Right ventricle myocardium inferior (tissue), 1 donor: ENCODE measurements at regions of chr10 and their contacts with region 1.

Region 1: DNA sequence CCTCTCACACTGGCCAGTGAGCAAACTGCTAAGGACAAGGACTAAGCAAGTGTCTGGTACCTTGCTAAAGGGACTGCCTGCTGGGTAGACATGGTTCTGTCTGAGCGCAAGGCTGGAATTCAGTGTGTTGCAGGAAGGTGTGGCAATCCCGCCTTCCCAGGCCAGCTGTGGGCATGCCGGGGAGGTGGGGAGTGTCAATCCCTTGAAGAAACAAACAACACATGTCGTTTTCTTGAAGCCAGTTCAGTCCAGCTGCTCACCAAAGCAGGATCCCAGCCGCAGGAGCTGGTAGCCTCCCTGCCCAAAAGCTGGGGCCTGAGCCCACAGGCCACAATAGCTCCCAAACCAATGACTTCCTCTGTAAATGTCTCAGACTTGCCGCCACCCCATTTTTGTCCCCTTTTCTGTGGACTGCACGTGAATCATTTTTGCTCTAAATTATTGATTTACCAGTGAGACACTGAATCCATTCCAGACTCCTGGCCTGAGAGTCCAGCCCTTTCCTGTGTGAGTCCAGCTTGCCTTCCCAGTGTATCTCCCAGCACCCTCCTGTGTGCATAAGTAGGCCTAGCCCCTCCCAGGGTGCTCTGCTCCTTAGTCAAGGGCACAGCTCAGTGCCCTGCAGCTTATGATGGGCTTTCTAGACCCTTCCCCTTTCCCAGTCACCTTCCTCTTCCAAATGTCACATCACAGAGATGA is 166.8 kb downstream of the RGS10 start:
- DNase-seq: no peak
- ATAC-seq: peak; percentile 10

Region 2: DNA sequence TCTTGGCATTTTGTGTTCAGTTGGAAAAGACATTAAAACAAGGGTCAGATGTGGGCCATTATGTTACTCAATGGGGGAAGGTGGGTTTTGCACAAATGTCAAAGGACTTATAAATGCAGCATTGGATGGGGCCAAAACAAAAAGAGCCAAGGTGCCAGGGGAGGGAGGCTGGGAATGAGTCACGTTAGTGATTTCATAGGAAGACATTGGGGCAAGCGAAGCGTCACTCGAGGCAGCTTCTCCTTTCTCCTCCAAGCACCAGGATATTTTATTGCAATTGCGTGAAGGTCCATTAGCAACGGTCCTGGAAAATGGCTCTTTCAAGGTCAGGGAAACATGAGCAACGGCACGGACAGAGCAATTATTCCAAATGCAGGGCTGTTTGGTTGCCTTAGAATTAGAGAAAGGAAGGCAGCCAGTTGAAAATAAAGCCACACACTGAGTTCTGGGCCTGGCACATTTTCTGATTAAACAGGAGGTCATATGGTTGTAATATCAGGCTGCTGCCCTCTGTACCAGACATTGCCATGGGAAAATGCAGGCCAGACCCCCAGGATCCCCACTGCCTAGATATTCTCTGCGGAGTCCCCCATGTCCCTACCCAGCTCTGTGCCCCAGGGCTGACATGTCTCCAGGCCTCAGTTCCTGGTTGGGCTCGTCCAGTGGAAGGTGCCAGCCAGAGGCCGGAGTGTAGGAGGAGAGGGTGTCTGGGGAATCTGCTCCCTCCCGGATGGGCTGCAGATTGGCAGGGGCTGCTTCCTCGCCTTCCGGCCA is 409.5 kb before region 1 on chr10:
- intact Hi-C with region 1: no loop called
- DNase-seq: no peak
- ATAC-seq: peak; percentile 73

Region 3: GRCh38 chr10:119341459-119342301 is 34.0 kb before region 1 on chr10:
- intact Hi-C with region 1: loop called (anchors 5 kb)
- DNase-seq: peak; percentile 88
- ATAC-seq: peak; percentile 90

Region 4: DNA sequence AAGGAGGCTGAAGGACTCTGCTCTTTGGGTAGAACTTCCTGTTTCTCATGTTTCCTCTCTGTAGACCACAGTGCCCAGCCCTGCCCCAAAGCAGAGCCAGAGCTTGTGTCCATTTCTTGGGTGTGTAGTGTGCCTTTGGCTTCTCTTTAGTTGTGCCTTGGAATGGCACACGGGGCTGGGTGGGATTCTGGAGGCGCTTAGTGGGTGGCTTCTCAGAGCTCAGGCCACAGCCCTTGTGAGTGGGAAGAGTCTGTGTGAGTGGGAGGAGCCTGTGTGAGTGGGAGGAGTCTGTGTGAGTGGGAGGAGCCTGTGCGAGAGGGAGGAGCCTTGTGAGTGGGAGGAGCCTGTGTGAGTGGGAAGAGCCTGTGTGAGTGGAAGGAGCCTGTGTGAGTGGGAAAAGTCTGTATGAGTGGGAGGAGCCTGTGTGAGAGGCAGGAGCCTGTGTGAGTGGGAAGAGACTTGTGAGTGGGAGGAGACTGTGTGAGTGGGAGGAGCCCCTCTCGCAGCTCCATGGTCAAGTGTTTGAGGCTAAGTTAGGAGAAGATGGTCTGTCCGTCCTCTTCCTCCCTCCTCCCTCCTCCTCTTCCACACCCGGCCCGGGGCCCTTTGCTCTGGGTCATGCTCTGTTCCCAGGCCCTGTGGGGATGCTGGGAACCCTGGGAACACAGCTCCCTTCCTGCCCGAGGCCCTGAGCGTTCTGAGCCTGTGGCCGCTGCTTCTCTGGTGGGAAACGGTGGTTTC is 15.4 kb before region 1 on chr10:
- intact Hi-C with region 1: loop called (anchors 2 kb)
- DNase-seq: peak; percentile 75
- ATAC-seq: peak; percentile 32